Tibial artery (tissue), 4 donors: ENCODE measurements at regions of chr18 and their contacts with region 1.

Region 1: GRCh38 chr18:63590373-63590772 is 3.2 kb downstream of the SERPINB13 start:
- DNase-seq: no peak
- H3K4me3 ChIP-seq: no peak overlapping the region
- H3K27ac ChIP-seq: no peak overlapping the region
- H3K4me1 ChIP-seq: no peaks in the 10 kb centered on the region
- H3K27me3 ChIP-seq: no peaks in the 10 kb centered on the region
- CTCF ChIP-seq: no peak

Region 2: GRCh38 chr18:63664571-63664970 is 74.2 kb after region 1 on chr18:
- intact Hi-C with region 1: loop called (anchors 2 kb)
- DNase-seq: no peak
- H3K4me3 ChIP-seq: no peak overlapping the region
- H3K27ac ChIP-seq: no peak overlapping the region
- H3K4me1 ChIP-seq: no peaks in the 10 kb centered on the region
- H3K27me3 ChIP-seq: no peaks in the 10 kb centered on the region
- CTCF ChIP-seq: no peak